ENCODE measurements at regions of chr1 and their contacts with region 1.

Region 1: GRCh38 chr1:10045480-10046355 is 13.0 kb downstream of the UBE4B start:
- DNase-seq: no peak
- H3K4me3 ChIP-seq: peak overlapping the region in 1 of 2 donors; percentile 14
- H3K27ac ChIP-seq: peak overlapping the region; percentile 68 to 74
- H3K4me1 ChIP-seq: peaks cover 4 to 27% of the 10 kb centered on the region in 2 donors
- H3K27me3 ChIP-seq: no peaks in the 10 kb centered on the region
- CTCF ChIP-seq: no peak

Region 2: DNA sequence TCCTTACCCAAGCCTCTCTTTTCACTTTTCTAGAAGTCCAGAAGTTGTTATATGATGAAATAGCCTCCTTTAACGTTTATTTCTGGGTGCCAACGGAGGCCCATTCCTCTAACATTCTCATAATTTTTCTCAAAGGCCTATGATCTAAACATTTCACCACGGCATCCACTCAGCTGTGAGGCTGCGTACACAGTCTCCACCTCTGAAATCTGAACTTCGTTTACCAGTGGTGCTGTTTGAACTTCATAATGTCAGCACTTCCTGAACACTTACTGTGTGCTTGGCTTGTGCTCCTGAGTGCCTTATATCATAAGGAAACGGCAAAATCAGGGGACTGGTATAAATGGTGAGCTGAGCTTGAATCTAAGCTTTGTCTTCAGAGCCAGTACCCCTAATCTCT is 60.7 kb before region 1 on chr1:
- intact Hi-C with region 1: no loop called
- DNase-seq: no peak
- H3K4me3 ChIP-seq: no peak overlapping the region
- H3K27ac ChIP-seq: no peak overlapping the region
- H3K4me1 ChIP-seq: no peaks in the 10 kb centered on the region
- H3K27me3 ChIP-seq: no peaks in the 10 kb centered on the region
- CTCF ChIP-seq: no peak

Region 3: DNA sequence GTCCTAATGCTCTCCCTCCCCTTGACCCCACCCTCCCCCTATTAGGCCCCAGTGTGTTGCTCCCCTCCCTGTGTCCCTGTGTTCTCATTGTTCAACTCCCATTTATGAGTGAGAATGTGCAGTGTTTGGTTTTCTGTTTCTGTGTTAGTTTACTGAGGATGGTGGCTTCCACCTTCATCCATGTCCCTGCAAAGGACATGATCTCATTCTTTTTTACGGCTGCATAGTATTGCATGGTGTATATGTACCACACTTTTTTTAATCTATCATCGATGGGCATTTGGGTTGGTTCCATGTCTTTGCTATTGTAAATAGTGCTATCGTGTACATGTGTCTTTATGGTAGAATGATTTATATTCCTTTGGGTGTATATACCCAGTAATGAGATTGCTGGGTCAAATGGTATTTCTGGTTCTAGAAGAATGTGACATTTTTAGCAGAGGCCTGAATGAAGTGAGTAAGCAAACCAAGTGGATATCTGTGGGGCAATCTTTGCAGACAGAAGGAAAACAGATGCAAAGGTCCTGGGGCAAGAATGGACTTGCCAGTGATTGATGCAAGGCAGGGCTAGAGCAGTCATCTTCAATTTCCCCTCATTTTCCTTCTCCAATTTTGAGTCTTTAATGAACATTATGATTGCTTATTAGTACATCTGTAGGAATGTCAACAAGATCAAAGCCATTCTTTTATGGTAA is 37.2 kb after region 1 on chr1:
- intact Hi-C with region 1: no loop called
- DNase-seq: no peak
- H3K4me3 ChIP-seq: no peak overlapping the region
- H3K27ac ChIP-seq: no peak overlapping the region
- H3K4me1 ChIP-seq: no peaks in the 10 kb centered on the region
- H3K27me3 ChIP-seq: no peaks in the 10 kb centered on the region
- CTCF ChIP-seq: no peak

Region 4: GRCh38 chr1:10128101-10128765 is 82.5 kb after region 1 on chr1:
- intact Hi-C with region 1: loop called (anchors 5 kb)
- DNase-seq: no peak
- H3K4me3 ChIP-seq: no peak overlapping the region
- H3K27ac ChIP-seq: peak overlapping the region; percentile 38 to 51
- H3K4me1 ChIP-seq: peaks cover 0 to 2% of the 10 kb centered on the region in 2 donors
- H3K27me3 ChIP-seq: no peaks in the 10 kb centered on the region
- CTCF ChIP-seq: no peak